Natural killer cell (primary cell): ENCODE measurements at regions of chr18 and their contacts with region 1.

Region 1: DNA sequence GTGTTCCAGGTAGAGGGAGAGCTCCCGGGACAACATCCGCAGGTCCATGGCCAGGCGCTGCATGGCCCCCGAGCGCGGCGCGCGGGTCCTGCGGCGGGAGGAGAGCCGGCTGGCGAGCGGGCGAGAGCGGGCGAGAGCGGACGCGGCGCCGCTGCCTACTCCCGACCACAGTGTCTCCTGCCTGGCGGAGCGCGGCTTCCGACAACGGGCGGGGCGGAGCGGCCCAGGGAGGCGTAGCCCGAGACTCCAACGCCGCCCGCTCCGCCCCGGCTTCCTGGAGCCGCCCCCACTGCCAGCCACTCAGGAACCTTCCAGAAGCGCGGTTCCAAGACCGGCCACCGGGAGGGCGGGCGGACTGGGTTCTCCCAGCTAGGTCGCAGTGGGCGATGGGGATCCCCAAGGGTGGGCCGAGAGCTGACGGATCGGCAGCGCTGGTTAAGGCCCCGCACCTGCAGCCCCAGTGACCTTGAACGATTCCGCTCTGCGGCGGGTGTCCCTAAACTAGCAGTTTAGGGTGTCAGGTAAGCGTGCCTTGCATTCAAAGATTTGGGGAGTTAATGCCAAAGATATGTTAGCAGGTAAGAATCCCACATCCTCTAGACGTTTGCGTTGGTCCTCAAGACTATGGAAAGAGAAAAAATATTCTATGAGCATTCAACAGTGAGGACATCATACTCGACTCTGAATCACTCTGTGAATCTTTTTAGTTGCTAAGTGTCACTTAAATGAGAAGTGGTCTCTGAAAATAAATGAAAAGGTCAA is at the start of gene ABHD3:
- DNase-seq: peak; percentile 87 to 96
- ATAC-seq: peak; percentile 91 to 98 (median 93)
- H3K4me3 ChIP-seq: peak within 1 kb of the TSS; percentile 67
- H3K4me3 Mint-ChIP-seq: peak within 1 kb of the TSS; percentile 91
- H3K27ac ChIP-seq: peak within 1 kb of the TSS; percentile 86
- H3K27ac Mint-ChIP-seq: peak within 1 kb of the TSS; percentile 85 to 90
- H3K4me1 ChIP-seq: peaks cover 4% of the 10 kb centered on the region
- H3K4me1 Mint-ChIP-seq: peaks cover 23 to 26% of the 10 kb centered on the region in 2 donors
- H3K27me3 ChIP-seq: no peaks in the 10 kb centered on the region
- H3K27me3 Mint-ChIP-seq: no peaks in the 10 kb centered on the region
- CTCF ChIP-seq: peak; percentile 10
- total RNA-seq, gene ABHD3: 39.9 to 47.3 (median 45.0) TPM

Region 2: DNA sequence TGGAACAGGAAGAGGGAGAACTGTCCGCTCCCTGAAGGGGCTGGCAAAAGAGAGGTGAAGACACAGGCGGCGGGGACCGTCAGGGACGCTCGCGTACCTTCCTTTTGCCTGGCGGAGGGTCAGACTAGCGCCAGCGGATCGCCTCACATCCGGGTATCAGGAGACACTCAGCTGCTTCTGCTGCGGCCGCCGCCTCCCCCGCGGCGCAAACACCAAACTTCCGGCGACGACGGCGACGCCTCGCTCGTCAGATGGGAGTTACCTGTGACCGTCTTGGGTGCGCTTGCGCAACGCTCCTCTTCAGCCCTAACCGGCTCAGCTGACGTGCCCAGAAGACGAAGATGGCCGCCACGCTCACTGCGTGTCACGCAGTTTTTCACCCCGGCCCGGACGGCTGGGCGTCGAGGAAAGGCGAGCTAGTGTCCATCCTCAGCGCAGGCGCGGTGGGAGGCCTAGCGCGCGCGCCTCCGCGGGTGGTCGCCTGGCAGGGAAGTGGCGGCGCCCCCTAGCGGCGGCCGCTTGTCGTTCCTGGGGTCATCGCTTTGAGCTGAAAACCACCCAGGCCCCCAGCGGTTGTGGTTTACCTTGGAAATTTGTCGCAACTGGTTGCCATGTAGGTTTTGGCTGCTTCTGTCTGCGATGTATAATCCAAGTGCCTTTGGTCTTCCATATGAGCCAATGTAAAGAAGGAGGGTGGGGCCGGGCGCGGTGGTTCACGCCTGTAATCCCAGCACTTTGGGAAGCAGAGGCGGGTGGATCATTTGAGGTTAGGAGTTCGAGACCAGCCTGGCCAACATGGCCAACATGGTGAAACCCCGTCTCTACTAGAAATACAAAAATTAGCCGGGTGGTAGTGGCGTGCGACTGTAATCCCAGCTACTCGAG is 104.0 kb before region 1 on chr18 and contains the start of gene ESCO1:
- intact Hi-C with region 1: loop called (anchors 2 kb)
- DNase-seq: peak; percentile 94 to 99
- ATAC-seq: peak; percentile 87 to 95 (median 88)
- H3K4me3 ChIP-seq: peak within 1 kb of the TSS; percentile 97
- H3K4me3 Mint-ChIP-seq: peak within 1 kb of the TSS; percentile 98
- H3K27ac ChIP-seq: peak within 1 kb of the TSS; percentile 99
- H3K27ac Mint-ChIP-seq: peak within 1 kb of the TSS; percentile 97 to 99
- H3K4me1 ChIP-seq: peaks cover 22% of the 10 kb centered on the region
- H3K4me1 Mint-ChIP-seq: peaks cover 19 to 33% of the 10 kb centered on the region in 2 donors
- H3K27me3 ChIP-seq: no peaks in the 10 kb centered on the region
- H3K27me3 Mint-ChIP-seq: no peaks in the 10 kb centered on the region
- CTCF ChIP-seq: peak; percentile 99
- total RNA-seq, gene ESCO1: 40.5 to 43.4 (median 42.8) TPM

Region 3: GRCh38 chr18:21612125-21612991 is 92.4 kb before region 1 on chr18 and contains the start of gene SNRPD1:
- intact Hi-C with region 1: loop called (anchors 1 kb)
- DNase-seq: peak; percentile 90 to 94
- ATAC-seq: peak; percentile 98 to 100 (median 98)
- H3K4me3 ChIP-seq: peak within 1 kb of the TSS; percentile 58
- H3K4me3 Mint-ChIP-seq: peak within 1 kb of the TSS; percentile 99
- H3K27ac ChIP-seq: peak within 1 kb of the TSS; percentile 70
- H3K27ac Mint-ChIP-seq: peak within 1 kb of the TSS; percentile 96 to 98
- H3K4me1 ChIP-seq: peaks cover 14% of the 10 kb centered on the region
- H3K4me1 Mint-ChIP-seq: peaks cover 18 to 29% of the 10 kb centered on the region in 2 donors
- H3K27me3 ChIP-seq: no peaks in the 10 kb centered on the region
- H3K27me3 Mint-ChIP-seq: no peaks in the 10 kb centered on the region
- CTCF ChIP-seq: peak; percentile 89
- total RNA-seq, gene SNRPD1: 28.0 to 33.8 (median 31.6) TPM

Region 4: GRCh38 chr18:21672521-21673267 is 32.1 kb before region 1 on chr18:
- intact Hi-C with region 1: no loop called
- DNase-seq: no peak
- ATAC-seq: no peak
- H3K4me3 ChIP-seq: no peak overlapping the region
- H3K4me3 Mint-ChIP-seq: no peak overlapping the region
- H3K27ac ChIP-seq: no peak overlapping the region
- H3K27ac Mint-ChIP-seq: no peak overlapping the region
- H3K4me1 ChIP-seq: no peaks in the 10 kb centered on the region
- H3K4me1 Mint-ChIP-seq: peaks cover 0 to 8% of the 10 kb centered on the region in 2 donors
- H3K27me3 ChIP-seq: no peaks in the 10 kb centered on the region
- H3K27me3 Mint-ChIP-seq: no peaks in the 10 kb centered on the region
- CTCF ChIP-seq: no peak

Region 5: GRCh38 chr18:21725201-21725600 is 20.4 kb after region 1 on chr18:
- intact Hi-C with region 1: no loop called
- DNase-seq: no peak
- ATAC-seq: no peak
- H3K4me3 ChIP-seq: no peak overlapping the region
- H3K4me3 Mint-ChIP-seq: no peak overlapping the region
- H3K27ac ChIP-seq: no peak overlapping the region
- H3K27ac Mint-ChIP-seq: no peak overlapping the region
- H3K4me1 ChIP-seq: no peaks in the 10 kb centered on the region
- H3K4me1 Mint-ChIP-seq: no peaks in the 10 kb centered on the region
- H3K27me3 ChIP-seq: no peaks in the 10 kb centered on the region
- H3K27me3 Mint-ChIP-seq: no peaks in the 10 kb centered on the region
- CTCF ChIP-seq: no peak

Region 6: DNA sequence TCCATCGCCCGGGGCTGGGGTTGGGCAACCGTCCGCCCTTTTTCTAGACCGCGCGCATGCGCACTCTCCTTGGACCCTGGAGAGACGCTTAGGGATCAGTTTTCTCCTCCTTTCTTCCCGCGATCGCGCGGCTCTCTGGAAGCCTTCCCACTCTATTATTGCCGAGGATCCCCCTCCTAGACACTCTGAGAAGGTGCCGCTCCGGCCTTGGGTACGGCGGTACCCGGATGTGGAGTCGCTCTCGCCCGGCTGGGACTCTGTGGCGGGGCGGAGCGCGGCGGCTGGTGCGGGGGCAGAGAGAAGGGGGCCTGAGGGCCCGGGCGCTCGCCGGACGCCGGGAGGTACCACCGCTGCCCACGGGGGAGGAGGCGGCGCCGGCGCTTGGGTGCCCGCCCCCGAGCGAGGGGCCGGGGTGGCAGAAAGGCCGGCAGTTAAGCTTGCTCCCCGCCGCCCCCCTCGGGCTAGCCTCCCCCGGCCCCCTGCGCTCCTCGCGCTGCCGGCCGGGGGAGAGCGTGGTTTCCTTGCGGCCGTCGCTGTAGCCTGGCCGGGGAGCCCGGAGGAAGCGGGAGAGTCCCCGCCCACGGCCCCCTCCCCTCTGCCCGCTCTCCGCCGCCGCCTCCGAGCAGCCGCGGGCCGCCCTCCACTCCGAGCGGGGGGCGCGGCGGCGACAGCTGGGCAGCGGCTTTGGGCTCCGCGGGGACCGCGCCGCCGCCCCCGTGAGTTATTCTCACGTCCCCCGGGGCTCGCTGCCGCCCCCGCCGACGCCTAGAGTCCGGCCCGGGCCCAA is 36.1 kb after region 1 on chr18 and contains the start of gene MIB1:
- intact Hi-C with region 1: loop called (anchors 1 kb)
- DNase-seq: peak; percentile 99
- ATAC-seq: peak; percentile 65 to 84 (median 74)
- H3K4me3 ChIP-seq: peak within 1 kb of the TSS; percentile 89
- H3K4me3 Mint-ChIP-seq: peak within 1 kb of the TSS; percentile 97
- H3K27ac ChIP-seq: peak within 1 kb of the TSS; percentile 96
- H3K27ac Mint-ChIP-seq: peak within 1 kb of the TSS; percentile 93 to 95
- H3K4me1 ChIP-seq: peaks cover 11% of the 10 kb centered on the region
- H3K4me1 Mint-ChIP-seq: peaks cover 27 to 30% of the 10 kb centered on the region in 2 donors
- H3K27me3 ChIP-seq: no peaks in the 10 kb centered on the region
- H3K27me3 Mint-ChIP-seq: peaks cover 7 to 10% of the 10 kb centered on the region in 2 donors
- CTCF ChIP-seq: no peak
- total RNA-seq, gene MIB1: 27.5 to 38.4 (median 35.6) TPM

Region 7: GRCh38 chr18:21777814-21778213 is 73.0 kb after region 1 on chr18:
- intact Hi-C with region 1: no loop called
- DNase-seq: no peak
- ATAC-seq: no peak
- H3K4me3 ChIP-seq: no peak overlapping the region
- H3K4me3 Mint-ChIP-seq: no peak overlapping the region
- H3K27ac ChIP-seq: no peak overlapping the region
- H3K27ac Mint-ChIP-seq: peak overlapping the region; percentile 1 to 3
- H3K4me1 ChIP-seq: no peaks in the 10 kb centered on the region
- H3K4me1 Mint-ChIP-seq: no peaks in the 10 kb centered on the region
- H3K27me3 ChIP-seq: no peaks in the 10 kb centered on the region
- H3K27me3 Mint-ChIP-seq: no peaks in the 10 kb centered on the region
- CTCF ChIP-seq: no peak

Region 8: GRCh38 chr18:21805771-21806366 is 101.1 kb after region 1 on chr18:
- intact Hi-C with region 1: no loop called
- DNase-seq: no peak
- ATAC-seq: no peak
- H3K4me3 ChIP-seq: no peak overlapping the region
- H3K4me3 Mint-ChIP-seq: no peak overlapping the region
- H3K27ac ChIP-seq: no peak overlapping the region
- H3K27ac Mint-ChIP-seq: no peak overlapping the region
- H3K4me1 ChIP-seq: no peaks in the 10 kb centered on the region
- H3K4me1 Mint-ChIP-seq: no peaks in the 10 kb centered on the region
- H3K27me3 ChIP-seq: no peaks in the 10 kb centered on the region
- H3K27me3 Mint-ChIP-seq: no peaks in the 10 kb centered on the region
- CTCF ChIP-seq: no peak